ENCODE measurements at regions of chr14 and their contacts with region 1.

Region 1: DNA sequence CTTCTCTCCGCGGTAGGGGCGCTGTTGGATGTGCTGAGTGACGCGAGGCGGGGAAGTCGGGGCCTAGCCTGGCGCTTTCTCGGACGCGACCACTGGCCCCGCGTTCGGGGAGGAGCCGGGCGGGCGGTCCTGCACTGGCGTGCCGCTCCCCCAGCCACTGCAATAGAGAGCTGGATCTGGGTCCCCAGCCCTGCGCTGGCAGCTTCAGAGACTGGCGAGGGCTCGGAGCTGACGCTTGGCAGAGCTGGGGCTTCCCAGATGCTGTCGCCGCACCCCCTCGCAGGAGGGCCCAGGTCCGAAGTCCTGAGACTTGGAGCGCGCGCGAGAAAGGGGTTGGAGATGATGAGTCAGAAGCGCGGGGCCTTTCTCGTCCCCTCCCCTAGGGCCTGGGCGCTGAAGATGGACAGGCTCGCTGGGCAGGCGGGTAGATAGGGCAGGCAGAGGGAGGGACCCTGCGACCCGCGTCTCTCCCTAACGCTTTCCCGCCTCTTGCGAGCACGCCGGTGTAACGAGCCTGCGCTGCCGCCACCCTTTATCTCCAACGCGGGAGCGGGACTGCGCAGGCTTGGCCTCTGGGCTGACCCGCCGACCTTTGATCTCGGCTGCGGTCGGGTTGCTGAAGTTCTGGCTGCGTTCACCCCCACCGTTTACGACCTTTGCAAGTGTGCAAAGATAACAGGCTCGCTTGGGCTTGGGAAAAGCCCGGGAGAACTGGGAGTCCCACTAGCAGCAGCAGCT is 3.0 kb downstream of the TMEM253 start:
- DNase-seq: peak; percentile 97
- ATAC-seq: peak; percentile 89
- H3K4me3 Mint-ChIP-seq: peak overlapping the region; percentile 93
- H3K27ac Mint-ChIP-seq: peak overlapping the region; percentile 91
- H3K4me1 Mint-ChIP-seq: peaks cover 43% of the 10 kb centered on the region
- H3K27me3 Mint-ChIP-seq: peaks cover 14% of the 10 kb centered on the region

Region 2: DNA sequence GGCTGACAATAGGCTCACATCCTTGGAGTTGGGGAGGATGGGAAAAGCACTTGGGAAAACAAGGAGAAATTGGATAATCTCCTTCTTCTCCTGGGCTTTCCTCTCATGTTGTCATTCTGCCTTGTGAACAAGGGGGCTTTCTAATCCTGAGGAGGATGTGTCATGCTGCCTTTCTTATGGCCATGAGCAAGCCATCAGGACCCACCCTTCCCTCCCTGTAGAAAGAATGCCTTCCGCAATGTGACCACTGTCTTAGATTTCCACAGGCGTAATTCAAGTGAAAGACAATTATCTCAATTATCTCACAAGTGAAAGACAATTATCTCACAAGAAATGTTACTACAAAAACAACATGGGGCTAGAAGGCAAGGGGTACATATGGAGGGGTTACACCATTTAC is 459.4 kb before region 1 on chr14:
- CTCF ChIA-PET with region 1: no interaction called
- POLR2A ChIA-PET with region 1: no interaction called
- DNase-seq: no peak
- ATAC-seq: no peak
- H3K4me3 Mint-ChIP-seq: no peak overlapping the region
- H3K27ac Mint-ChIP-seq: no peak overlapping the region
- H3K4me1 Mint-ChIP-seq: no peaks in the 10 kb centered on the region
- H3K27me3 Mint-ChIP-seq: peaks cover 41% of the 10 kb centered on the region

Region 3: DNA sequence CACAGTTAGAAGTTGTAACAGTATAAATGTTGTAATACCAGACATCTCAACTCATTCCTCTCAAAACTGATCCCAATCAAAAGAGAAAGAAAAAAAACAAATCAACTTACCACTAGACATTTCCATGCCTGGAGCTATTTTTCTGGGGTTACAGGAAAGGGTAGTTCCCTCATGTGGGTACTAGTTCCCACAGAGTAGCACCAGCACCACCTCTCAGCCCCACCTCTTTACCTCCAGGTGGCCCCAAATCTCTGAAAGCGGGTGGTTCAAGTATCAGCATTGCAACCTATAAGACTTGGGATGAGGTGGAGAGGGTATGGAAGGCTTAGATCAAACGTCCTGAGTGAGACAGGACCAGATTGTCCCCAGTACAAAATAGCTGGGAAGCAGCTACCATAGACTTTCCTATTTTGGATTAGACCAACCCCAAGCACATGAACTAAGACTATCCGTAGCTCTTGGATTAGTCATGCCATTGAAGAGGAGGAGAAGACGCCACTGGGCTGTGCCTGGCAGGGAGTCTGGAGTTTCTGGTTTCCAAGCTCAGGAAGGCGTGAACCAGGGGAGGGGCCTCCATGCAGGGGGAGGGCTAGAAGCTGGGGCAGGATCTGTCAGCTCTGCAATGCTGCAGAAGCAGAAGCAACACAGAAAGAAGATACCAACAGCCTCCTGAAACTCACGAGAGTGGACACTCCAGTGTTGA is 105.1 kb before region 1 on chr14 and contains the start of gene SLC39A2:
- CTCF ChIA-PET with region 1: interaction called, 13 read pairs
- POLR2A ChIA-PET with region 1: no interaction called
- DNase-seq: no peak
- ATAC-seq: peak; percentile 20
- H3K4me3 Mint-ChIP-seq: no peak within 1 kb of the TSS
- H3K27ac Mint-ChIP-seq: peak within 1 kb of the TSS; percentile 51
- H3K4me1 Mint-ChIP-seq: peaks cover 12% of the 10 kb centered on the region
- H3K27me3 Mint-ChIP-seq: no peaks in the 10 kb centered on the region
- total RNA-seq, gene SLC39A2: not detected

Region 4: DNA sequence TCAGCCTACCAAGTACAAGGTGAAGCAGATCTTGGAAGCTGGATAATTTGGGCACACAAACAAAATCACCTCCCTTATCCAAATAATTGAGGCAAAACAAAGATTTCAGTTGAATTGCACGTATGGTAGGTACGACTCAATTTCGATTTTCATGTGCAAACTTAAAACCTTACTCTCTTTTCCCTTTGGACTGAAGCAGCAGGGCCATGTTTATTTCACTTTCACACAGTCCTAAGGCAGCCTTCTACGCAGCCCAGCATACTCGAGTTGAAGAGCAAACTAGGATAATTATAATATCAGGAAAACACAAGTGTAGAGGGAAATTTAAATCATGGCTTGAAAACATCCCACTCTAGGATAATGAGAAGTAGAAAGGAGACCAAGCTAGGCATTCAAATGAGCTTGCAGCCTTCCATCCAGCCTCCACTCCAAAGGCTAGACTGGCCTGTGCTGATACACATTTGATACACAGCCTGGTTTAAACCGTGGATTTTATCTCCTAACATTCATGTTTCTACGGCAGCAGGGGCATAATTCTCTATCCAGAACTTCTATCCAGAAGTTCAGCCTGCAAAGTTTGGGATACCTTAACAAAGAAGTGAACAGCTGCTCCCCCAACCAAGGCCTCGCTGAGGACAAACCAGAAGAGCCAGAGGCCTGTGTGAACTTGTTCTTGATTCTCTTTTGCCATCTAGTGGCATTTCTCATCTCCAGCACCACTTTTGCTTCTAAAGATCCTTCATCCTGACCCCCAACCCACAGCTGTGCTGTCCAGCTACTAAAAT is 64.1 kb before region 1 on chr14:
- CTCF ChIA-PET with region 1: interaction called, 14 read pairs
- POLR2A ChIA-PET with region 1: interaction called, 5 read pairs
- DNase-seq: peak; percentile 29
- ATAC-seq: peak; percentile 67
- H3K4me3 Mint-ChIP-seq: no peak overlapping the region
- H3K27ac Mint-ChIP-seq: no peak overlapping the region
- H3K4me1 Mint-ChIP-seq: peaks cover 6% of the 10 kb centered on the region
- H3K27me3 Mint-ChIP-seq: peaks cover 22% of the 10 kb centered on the region

Region 5: GRCh38 chr14:21071225-21072030 is 32.5 kb before region 1 on chr14:
- CTCF ChIA-PET with region 1: interaction called, 140 read pairs
- POLR2A ChIA-PET with region 1: interaction called, 5 read pairs
- DNase-seq: peak; percentile 65
- ATAC-seq: peak; percentile 63
- H3K4me3 Mint-ChIP-seq: peak overlapping the region; percentile 68
- H3K27ac Mint-ChIP-seq: no peak overlapping the region
- H3K4me1 Mint-ChIP-seq: peaks cover 37% of the 10 kb centered on the region
- H3K27me3 Mint-ChIP-seq: peaks cover 63% of the 10 kb centered on the region

Region 6: GRCh38 chr14:21123429-21123828 is 19.6 kb after region 1 on chr14:
- CTCF ChIA-PET with region 1: interaction called, 18 read pairs
- POLR2A ChIA-PET with region 1: no interaction called
- DNase-seq: no peak
- ATAC-seq: no peak
- H3K4me3 Mint-ChIP-seq: no peak overlapping the region
- H3K27ac Mint-ChIP-seq: no peak overlapping the region
- H3K4me1 Mint-ChIP-seq: no peaks in the 10 kb centered on the region
- H3K27me3 Mint-ChIP-seq: peaks cover 28% of the 10 kb centered on the region